ENCODE measurements at regions of chr2 and their contacts with region 1.

Region 1: DNA sequence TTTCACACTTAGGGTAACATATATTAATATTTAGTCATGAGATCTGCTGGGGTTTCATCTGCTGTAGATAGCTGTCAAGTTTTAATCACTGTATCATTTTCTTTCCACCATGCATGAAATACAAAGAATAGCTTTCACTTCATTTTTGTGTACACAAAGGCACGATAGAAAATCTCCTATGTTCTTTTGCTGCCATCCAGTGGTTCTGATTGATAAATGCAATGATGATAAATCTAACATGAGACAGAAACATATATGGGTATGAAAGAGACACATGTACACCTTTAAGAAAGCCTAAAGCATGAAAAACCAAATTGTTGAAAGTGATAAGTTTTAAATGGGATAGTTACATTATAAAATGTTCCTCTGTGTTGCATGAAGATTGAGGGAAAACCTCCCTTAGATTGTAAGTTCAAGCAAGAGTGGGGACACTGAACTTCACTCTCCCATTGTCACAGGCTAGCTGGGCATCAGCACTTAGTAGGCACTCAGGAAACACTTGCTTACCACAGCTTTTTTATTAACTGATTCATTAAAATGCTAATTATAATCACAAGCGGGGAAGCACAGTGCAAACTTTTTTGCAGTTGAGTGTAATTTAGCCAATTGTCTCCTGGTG is 31.2 kb downstream of the C1D start:
- DNase-seq: peak; percentile 49
- H3K27ac ChIP-seq: no peak overlapping the region
- CTCF ChIP-seq: peak; percentile 81

Region 2: GRCh38 chr2:67733517-67733916 is 298.1 kb before region 1 on chr2:
- CTCF ChIA-PET with region 1: interaction called, 13 read pairs
- POLR2A ChIA-PET with region 1: no interaction called
- DNase-seq: peak; percentile 45
- H3K27ac ChIP-seq: no peak overlapping the region
- CTCF ChIP-seq: no peak

Region 3: DNA sequence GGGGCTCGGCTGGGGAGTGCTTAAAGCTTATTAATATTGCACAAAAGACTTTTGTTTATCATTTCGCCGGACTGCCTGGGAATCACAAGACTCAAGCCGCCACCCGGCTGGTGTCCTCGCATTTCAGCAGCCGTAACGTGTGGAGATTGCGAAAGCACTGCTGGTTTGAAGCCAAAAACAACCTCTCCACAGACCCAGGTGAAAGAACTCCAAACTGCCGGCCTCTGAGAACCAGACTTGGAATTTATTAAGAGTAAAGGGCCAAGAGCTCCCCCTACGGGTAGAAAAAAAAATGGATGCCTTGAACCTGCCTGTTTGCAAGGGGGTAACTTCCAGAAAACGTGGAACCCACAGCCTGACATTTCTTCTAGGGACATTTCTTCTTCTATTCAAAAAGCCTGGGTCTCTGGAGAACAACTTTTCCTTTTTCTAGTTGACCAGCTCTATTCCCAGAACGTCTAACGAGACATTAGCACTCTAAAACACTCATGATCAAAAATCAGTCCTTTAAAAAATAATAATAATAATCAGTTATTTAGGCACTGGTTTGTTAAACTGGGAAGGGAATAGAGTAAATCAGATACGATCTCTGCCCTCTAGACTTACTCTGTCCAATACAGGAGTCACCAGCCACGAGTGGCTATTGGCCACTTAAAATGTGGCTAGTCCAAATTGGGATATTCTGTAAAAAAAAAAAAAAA is 185.1 kb before region 1 on chr2:
- CTCF ChIA-PET with region 1: interaction called, 10 read pairs
- POLR2A ChIA-PET with region 1: no interaction called
- DNase-seq: peak; percentile 92
- H3K27ac ChIP-seq: peak overlapping the region; percentile 68
- CTCF ChIP-seq: peak; percentile 81